ENCODE measurements at regions of chr11 and their contacts with region 1.

Region 1: GRCh38 chr11:57335343-57336110 is at the start of gene SSRP1:
- DNase-seq: peak; percentile 78 to 94
- ATAC-seq: peak; percentile 94 to 98 (median 98)
- H3K4me3 ChIP-seq: peak within 1 kb of the TSS; percentile 65
- H3K4me3 Mint-ChIP-seq: peak within 1 kb of the TSS; percentile 99
- H3K27ac ChIP-seq: peak within 1 kb of the TSS; percentile 95
- H3K27ac Mint-ChIP-seq: peak within 1 kb of the TSS; percentile 97 to 99
- H3K4me1 ChIP-seq: peaks cover 19% of the 10 kb centered on the region
- H3K4me1 Mint-ChIP-seq: peaks cover 35% of the 10 kb centered on the region in 2 donors
- H3K27me3 ChIP-seq: no peaks in the 10 kb centered on the region
- H3K27me3 Mint-ChIP-seq: peaks cover 0 to 11% of the 10 kb centered on the region in 2 donors
- CTCF ChIP-seq: no peak
- total RNA-seq, gene SSRP1: 45.5 to 50.0 (median 47.1) TPM

Region 2: DNA sequence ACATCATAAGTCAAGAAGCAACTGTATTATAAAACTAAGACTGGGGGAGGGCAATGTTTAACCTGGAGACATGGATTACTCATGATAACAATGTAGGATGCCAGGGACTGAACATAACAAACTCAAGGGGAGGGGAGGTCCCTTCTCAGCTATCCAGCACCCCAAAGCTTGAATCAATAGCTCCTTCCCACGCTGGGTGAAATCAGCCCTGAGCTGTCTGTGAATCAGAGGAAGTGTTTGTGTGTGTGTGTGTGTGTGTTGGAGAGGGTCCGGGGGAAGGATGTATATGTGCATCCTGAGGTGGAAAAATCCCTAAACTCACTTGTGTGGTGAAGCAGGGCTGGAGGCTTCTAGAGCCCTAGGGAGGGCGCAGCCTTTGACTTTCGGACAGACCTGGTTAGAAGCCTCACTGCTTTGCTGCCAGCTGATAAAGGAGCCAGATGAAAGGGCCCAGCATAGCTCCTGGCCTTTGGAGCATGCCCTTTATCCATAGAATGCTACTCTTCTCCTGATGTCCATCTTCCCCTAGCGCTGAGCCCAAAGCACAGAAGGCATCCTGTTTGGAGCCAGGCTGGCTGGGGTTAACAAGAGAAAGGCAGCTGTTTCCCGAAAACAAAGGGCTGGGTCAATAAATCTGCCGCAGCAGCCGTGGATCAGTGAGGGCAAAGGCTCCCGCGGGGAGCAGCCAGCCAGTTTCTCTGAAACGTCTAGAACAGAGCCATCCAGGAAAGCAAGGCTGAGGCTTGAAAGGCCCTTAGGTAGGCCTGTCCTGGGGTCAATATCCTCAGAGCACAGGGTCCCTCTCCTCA is 46.6 kb before region 1 on chr11:
- intact Hi-C with region 1: no loop called
- DNase-seq: no peak
- ATAC-seq: no peak
- H3K4me3 ChIP-seq: no peak overlapping the region
- H3K4me3 Mint-ChIP-seq: no peak overlapping the region
- H3K27ac ChIP-seq: no peak overlapping the region
- H3K27ac Mint-ChIP-seq: no peak overlapping the region
- H3K4me1 ChIP-seq: no peaks in the 10 kb centered on the region
- H3K4me1 Mint-ChIP-seq: no peaks in the 10 kb centered on the region
- H3K27me3 ChIP-seq: no peaks in the 10 kb centered on the region
- H3K27me3 Mint-ChIP-seq: peaks cover 3 to 22% of the 10 kb centered on the region in 2 donors
- CTCF ChIP-seq: no peak

Region 3: GRCh38 chr11:57324886-57325734 is 10.4 kb before region 1 on chr11 and contains the start of gene TNKS1BP1:
- intact Hi-C with region 1: loop called (anchors 1 kb)
- DNase-seq: peak; percentile 84 to 93
- ATAC-seq: peak; percentile 83 to 90 (median 84)
- H3K4me3 ChIP-seq: peak within 1 kb of the TSS; percentile 81
- H3K4me3 Mint-ChIP-seq: peak within 1 kb of the TSS; percentile 93
- H3K27ac ChIP-seq: peak within 1 kb of the TSS; percentile 87
- H3K27ac Mint-ChIP-seq: peak within 1 kb of the TSS; percentile 96 to 97
- H3K4me1 ChIP-seq: peaks cover 19% of the 10 kb centered on the region
- H3K4me1 Mint-ChIP-seq: peaks cover 10 to 35% of the 10 kb centered on the region in 2 donors
- H3K27me3 ChIP-seq: no peaks in the 10 kb centered on the region
- H3K27me3 Mint-ChIP-seq: no peaks in the 10 kb centered on the region
- CTCF ChIP-seq: no peak
- total RNA-seq, gene TNKS1BP1: 4.3 to 9.3 (median 7.5) TPM

Region 4: DNA sequence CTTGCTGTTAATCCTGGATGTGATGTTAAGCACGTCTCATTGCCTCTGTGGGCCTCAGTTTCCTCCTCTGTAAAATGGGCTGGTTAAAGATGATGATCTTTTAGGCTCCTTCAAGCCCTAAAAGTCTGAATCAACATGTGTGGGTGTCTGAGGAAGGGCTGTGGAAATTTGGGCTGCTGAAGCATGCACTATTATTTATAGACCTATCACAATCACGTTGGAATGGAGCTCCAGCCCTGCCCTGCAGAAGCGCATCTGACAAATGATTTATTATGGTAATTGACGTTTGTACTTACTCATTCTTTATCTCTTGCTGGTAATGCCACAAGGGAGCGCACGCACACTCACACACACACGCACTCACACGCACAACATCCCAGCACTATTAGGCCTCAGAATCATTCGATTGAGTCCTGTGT is 23.0 kb after region 1 on chr11:
- intact Hi-C with region 1: no loop called
- DNase-seq: no peak
- ATAC-seq: no peak
- H3K4me3 ChIP-seq: no peak overlapping the region
- H3K4me3 Mint-ChIP-seq: no peak overlapping the region
- H3K27ac ChIP-seq: no peak overlapping the region
- H3K27ac Mint-ChIP-seq: no peak overlapping the region
- H3K4me1 ChIP-seq: peaks cover 7% of the 10 kb centered on the region
- H3K4me1 Mint-ChIP-seq: peaks cover 0 to 7% of the 10 kb centered on the region in 2 donors
- H3K27me3 ChIP-seq: no peaks in the 10 kb centered on the region
- H3K27me3 Mint-ChIP-seq: peaks cover 0 to 6% of the 10 kb centered on the region in 2 donors
- CTCF ChIP-seq: no peak

Region 5: GRCh38 chr11:57426929-57427726 is 91.6 kb after region 1 on chr11 and contains the start of gene SLC43A3:
- intact Hi-C with region 1: loop called (anchors 5 kb)
- DNase-seq: peak; percentile 52 to 76
- ATAC-seq: peak; percentile 50 to 69 (median 57)
- H3K4me3 ChIP-seq: peak within 1 kb of the TSS; percentile 48
- H3K4me3 Mint-ChIP-seq: peak within 1 kb of the TSS; percentile 91
- H3K27ac ChIP-seq: peak within 1 kb of the TSS; percentile 47
- H3K27ac Mint-ChIP-seq: peak within 1 kb of the TSS; percentile 79 to 90
- H3K4me1 ChIP-seq: peaks cover 47% of the 10 kb centered on the region
- H3K4me1 Mint-ChIP-seq: peaks cover 43 to 54% of the 10 kb centered on the region in 2 donors
- H3K27me3 ChIP-seq: no peaks in the 10 kb centered on the region
- H3K27me3 Mint-ChIP-seq: peaks cover 0 to 7% of the 10 kb centered on the region in 2 donors
- CTCF ChIP-seq: no peak
- total RNA-seq, gene SLC43A3: 17.0 to 22.2 (median 20.7) TPM